PC-3 (cell line): ENCODE measurements at regions of chr5 and their contacts with region 1.

Region 1: GRCh38 chr5:143111799-143112198 is 291.7 kb downstream of the NR3C1 start:
- DNase-seq: no peak
- ATAC-seq: no peak
- H3K4me3 ChIP-seq: no peak overlapping the region
- H3K27ac ChIP-seq: no peak overlapping the region
- H3K4me1 ChIP-seq: no peaks in the 10 kb centered on the region
- H3K27me3 ChIP-seq: no peaks in the 10 kb centered on the region
- CTCF ChIP-seq: no peak

Region 2: GRCh38 chr5:143002459-143003328 is 109.1 kb before region 1 on chr5:
- CTCF ChIA-PET with region 1: no interaction called
- POLR2A ChIA-PET with region 1: no interaction called
- intact Hi-C with region 1: no loop called
- DNase-seq: peak; percentile 47
- ATAC-seq: peak; percentile 48
- H3K4me3 ChIP-seq: no peak overlapping the region
- H3K27ac ChIP-seq: 0 out of 2 replicates have a peak overlapping the region, but pooled peaks have one; percentile 25
- H3K4me1 ChIP-seq: peaks cover 14% of the 10 kb centered on the region
- H3K27me3 ChIP-seq: no peaks in the 10 kb centered on the region
- CTCF ChIP-seq: peak; percentile 60

Region 3: GRCh38 chr5:143153332-143154119 is 41.7 kb after region 1 on chr5:
- CTCF ChIA-PET with region 1: no interaction called
- POLR2A ChIA-PET with region 1: no interaction called
- intact Hi-C with region 1: no loop called
- DNase-seq: no peak
- ATAC-seq: no peak; the same call in 1 of the 2 replicates
- H3K4me3 ChIP-seq: no peak overlapping the region
- H3K27ac ChIP-seq: no peak overlapping the region
- H3K4me1 ChIP-seq: peaks cover 20% of the 10 kb centered on the region
- H3K27me3 ChIP-seq: no peaks in the 10 kb centered on the region
- CTCF ChIP-seq: no peak

Region 4: GRCh38 chr5:143251946-143252345 is 140.1 kb after region 1 on chr5:
- CTCF ChIA-PET with region 1: no interaction called
- POLR2A ChIA-PET with region 1: interaction called, 33 read pairs
- intact Hi-C with region 1: no loop called
- DNase-seq: no peak
- ATAC-seq: no peak
- H3K4me3 ChIP-seq: no peak overlapping the region
- H3K27ac ChIP-seq: no peak overlapping the region
- H3K4me1 ChIP-seq: peaks cover 23% of the 10 kb centered on the region
- H3K27me3 ChIP-seq: no peaks in the 10 kb centered on the region
- CTCF ChIP-seq: no peak

Region 5: DNA sequence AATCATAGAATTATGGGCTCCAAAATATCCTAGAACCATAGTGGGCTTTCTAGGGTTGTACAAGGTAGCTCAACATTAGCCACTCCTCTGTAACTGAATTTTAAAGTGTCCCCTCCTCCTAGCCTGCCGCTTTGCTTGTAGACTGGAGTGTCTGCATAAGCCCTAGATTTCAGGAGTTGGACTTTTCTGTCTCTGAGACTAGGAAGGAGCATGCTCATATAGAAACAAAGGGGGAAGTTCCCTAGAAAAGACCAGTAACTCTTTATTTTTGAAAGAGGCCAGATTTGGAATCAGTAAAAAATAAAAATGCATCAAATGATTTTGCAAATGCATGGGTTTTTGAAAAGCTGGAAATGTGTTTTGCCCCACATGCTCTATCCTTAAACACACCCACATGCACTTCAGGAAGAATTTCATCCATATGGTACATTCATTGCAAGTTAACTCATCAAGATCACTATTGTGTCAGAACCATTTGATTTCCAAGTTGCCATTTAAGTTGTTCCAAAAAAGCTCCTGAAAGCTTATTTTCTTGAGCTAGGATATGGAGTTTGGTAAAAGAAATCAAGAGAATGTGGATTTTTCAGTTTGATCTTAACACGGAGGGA is 412.6 kb after region 1 on chr5:
- CTCF ChIA-PET with region 1: no interaction called
- POLR2A ChIA-PET with region 1: no interaction called
- intact Hi-C with region 1: no loop called
- DNase-seq: no peak
- ATAC-seq: no peak
- H3K4me3 ChIP-seq: no peak overlapping the region
- H3K27ac ChIP-seq: no peak overlapping the region
- H3K4me1 ChIP-seq: no peaks in the 10 kb centered on the region
- H3K27me3 ChIP-seq: no peaks in the 10 kb centered on the region
- CTCF ChIP-seq: no peak